ENCODE measurements at regions of chr2 and their contacts with region 1.

Region 1: GRCh38 chr2:199459286-199460016 is 1.7 kb upstream of the SATB2 start:
- DNase-seq: peak; percentile 80
- ATAC-seq: peak; percentile 7
- H3K4me3 Mint-ChIP-seq: peak overlapping the region; percentile 82
- H3K27ac Mint-ChIP-seq: peak overlapping the region; percentile 78
- H3K4me1 Mint-ChIP-seq: peaks cover 24% of the 10 kb centered on the region
- H3K27me3 Mint-ChIP-seq: peaks cover 41% of the 10 kb centered on the region

Region 2: DNA sequence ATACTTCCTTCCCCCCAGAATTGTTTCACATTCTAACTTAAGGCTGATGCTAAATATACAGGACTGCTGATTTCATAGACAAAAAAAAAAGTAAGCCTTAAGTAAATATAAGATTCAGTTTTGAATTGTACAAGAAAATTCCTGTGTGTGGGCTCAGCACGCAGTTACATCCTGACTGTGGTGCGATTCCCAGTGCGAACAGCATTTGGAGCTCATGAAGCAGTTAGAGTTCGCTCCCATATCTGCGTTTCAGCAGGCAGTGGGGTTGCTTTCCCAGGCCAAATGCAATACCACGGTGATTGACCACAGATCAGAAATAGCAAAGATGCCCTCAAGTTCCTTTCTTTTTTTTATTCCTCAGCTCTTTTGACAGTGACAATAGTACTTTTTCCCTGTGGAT is 77.4 kb before region 1 on chr2:
- CTCF ChIA-PET with region 1: no interaction called
- POLR2A ChIA-PET with region 1: no interaction called
- intact Hi-C with region 1: no loop called
- DNase-seq: no peak
- ATAC-seq: no peak
- H3K4me3 Mint-ChIP-seq: no peak overlapping the region
- H3K27ac Mint-ChIP-seq: no peak overlapping the region
- H3K4me1 Mint-ChIP-seq: no peaks in the 10 kb centered on the region
- H3K27me3 Mint-ChIP-seq: peaks cover 19% of the 10 kb centered on the region

Region 3: DNA sequence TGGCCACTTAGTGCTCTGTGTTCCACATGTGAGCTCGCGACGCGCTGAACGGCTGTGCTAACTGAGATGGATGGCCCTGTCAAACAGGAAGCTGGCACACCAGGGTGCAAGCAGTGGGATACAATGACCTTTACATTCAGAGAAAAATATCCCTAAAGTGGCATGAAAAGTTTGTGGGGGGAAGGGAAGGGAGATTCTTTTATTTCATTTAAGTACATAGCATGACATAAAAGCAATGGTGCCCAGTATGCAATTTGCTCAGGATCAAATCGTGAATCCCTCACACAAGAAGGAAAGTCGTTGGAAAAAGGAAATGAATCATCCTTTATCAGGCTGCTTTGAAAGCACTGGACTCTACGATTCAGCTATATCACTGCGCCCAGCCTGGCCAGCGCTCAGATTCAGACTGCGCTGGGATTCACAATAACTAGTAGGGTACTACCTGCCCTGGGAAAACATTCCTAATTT is 27.7 kb before region 1 on chr2:
- CTCF ChIA-PET with region 1: no interaction called
- POLR2A ChIA-PET with region 1: no interaction called
- intact Hi-C with region 1: no loop called
- DNase-seq: no peak
- ATAC-seq: no peak
- H3K4me3 Mint-ChIP-seq: no peak overlapping the region
- H3K27ac Mint-ChIP-seq: no peak overlapping the region
- H3K4me1 Mint-ChIP-seq: no peaks in the 10 kb centered on the region
- H3K27me3 Mint-ChIP-seq: peaks cover 22% of the 10 kb centered on the region

Region 4: DNA sequence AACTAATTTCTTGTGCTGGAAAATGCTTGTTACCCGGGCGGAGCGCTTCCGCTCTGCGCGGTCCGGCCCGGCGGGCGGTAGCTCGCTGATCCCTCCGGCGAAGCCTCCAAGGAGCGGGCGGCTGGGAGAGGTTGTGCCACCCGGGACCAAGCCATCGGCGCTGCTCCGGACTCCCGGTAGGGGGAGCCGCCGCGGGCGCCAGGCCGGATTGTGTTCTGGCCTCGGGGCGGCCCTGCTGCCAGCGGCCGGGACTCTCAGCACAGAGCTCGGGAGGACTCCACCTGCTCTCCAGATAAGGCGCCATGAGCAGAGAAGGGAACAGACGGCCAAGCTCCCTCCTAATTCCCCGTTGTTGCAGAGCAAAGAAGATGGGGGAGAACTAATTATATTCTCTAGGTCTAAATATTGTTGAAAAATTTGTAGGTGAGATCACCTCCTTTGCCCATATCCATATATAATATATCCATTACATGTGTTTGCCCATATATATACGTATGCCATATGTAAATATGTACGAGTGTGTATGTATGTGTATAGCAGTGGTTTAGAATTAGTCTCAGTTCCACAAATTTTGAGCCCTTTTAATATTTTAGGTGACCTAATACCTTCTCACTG is 12.1 kb after region 1 on chr2:
- CTCF ChIA-PET with region 1: interaction called, 3 read pairs
- POLR2A ChIA-PET with region 1: no interaction called
- intact Hi-C with region 1: loop called (anchors 1 to 2 kb)
- DNase-seq: peak; percentile 69
- ATAC-seq: peak; percentile 71
- H3K4me3 Mint-ChIP-seq: no peak overlapping the region
- H3K27ac Mint-ChIP-seq: no peak overlapping the region
- H3K4me1 Mint-ChIP-seq: peaks cover 17% of the 10 kb centered on the region
- H3K27me3 Mint-ChIP-seq: peaks cover 70% of the 10 kb centered on the region

Region 5: DNA sequence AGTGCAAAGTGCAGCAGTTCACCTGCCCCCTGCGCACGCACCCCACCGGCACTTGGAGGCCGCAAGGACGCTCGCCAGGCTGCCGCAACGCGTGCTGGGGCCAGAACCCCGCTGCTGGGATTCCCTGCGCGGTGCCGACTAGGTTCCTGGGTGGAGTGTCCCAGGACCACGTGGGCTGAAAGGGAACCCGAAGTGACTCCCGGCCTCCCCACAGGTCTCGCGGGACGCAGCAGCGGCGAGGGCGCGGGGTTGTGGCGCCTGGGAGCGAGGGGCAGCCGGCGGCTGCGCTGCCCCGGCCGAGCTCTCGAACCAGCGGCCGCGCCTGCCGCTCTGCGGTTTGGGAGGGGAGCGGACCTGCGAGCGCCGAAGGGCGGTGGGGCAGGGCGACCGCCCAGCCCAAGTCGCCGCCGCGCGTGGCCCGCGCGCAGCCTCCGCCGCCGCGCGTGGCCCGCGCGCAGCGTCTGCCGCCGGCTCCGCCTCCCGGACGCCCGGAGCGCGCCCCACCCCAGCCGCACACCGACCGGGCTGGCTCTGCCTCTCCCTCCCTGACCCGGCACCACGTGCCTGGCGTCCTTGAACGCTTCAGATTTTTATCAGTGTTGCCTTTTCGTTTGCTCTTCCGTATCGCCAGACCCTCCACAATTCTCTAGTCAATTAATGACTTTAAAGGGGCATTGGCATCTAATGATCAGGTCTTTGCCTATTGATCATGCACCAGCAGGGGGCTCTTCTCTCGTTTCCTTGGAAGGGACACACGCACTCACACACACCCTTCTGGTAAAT is 391.5 kb after region 1 on chr2 and contains the start of gene FTCDNL1:
- CTCF ChIA-PET with region 1: no interaction called
- POLR2A ChIA-PET with region 1: no interaction called
- intact Hi-C with region 1: loop called in 1 of 2 experiments (anchors 5 kb)
- DNase-seq: peak; percentile 83
- ATAC-seq: peak; percentile 97
- H3K4me3 Mint-ChIP-seq: peak within 1 kb of the TSS; percentile 87
- H3K27ac Mint-ChIP-seq: peak within 1 kb of the TSS; percentile 93
- H3K4me1 Mint-ChIP-seq: peaks cover 6% of the 10 kb centered on the region
- H3K27me3 Mint-ChIP-seq: peaks cover 2% of the 10 kb centered on the region
- total RNA-seq, gene FTCDNL1: 3.8 to 4.3 TPM